ENCODE measurements at regions of chr1 and their contacts with region 1.

Region 1: DNA sequence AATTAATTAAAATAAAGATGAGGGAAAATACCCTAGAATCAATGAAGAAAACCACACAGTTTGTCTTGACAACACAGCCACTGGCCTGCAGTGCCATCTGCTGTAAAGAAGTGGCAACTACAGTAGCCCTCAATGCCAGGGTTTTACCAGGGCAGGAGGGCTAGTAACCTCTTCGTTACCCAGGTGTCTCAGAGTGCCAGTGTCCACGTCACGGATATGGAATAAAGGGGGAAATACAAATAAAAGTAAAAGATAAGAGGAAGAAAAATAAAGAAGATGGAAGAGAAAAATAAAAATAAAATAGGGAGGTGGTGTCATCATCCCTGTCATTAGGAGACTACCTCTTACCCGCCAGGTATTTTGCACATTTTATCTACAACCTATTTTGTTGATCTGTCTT is 14.2 kb upstream of the SLC44A3 start:
- DNase-seq: peak in 8 of 9 experiments; percentile 22 to 61 (median 44)
- ATAC-seq: peak; percentile 70
- H3K4me3 ChIP-seq: no peak overlapping the region
- H3K4me3 Mint-ChIP-seq: no peak overlapping the region
- H3K27ac ChIP-seq: no peak overlapping the region
- H3K27ac Mint-ChIP-seq: no peak overlapping the region
- H3K4me1 ChIP-seq: peaks cover 5% of the 10 kb centered on the region
- H3K4me1 Mint-ChIP-seq: peaks cover 10% of the 10 kb centered on the region
- H3K27me3 ChIP-seq: no peaks in the 10 kb centered on the region
- H3K27me3 Mint-ChIP-seq: peaks cover 5% of the 10 kb centered on the region
- CTCF ChIP-seq: peak; percentile 99

Region 2: GRCh38 chr1:93437976-93438605 is 1367.8 kb before region 1 on chr1:
- CTCF ChIA-PET with region 1: no interaction called
- POLR2A ChIA-PET with region 1: no interaction called
- intact Hi-C with region 1: loop called (anchors 5 to 10 kb)
- DNase-seq: peak in 2 of 9 experiments; percentile 45 to 59
- ATAC-seq: peak; percentile 52
- H3K4me3 ChIP-seq: no peak overlapping the region
- H3K4me3 Mint-ChIP-seq: no peak overlapping the region
- H3K27ac ChIP-seq: no peak overlapping the region
- H3K27ac Mint-ChIP-seq: no peak overlapping the region
- H3K4me1 ChIP-seq: no peaks in the 10 kb centered on the region
- H3K4me1 Mint-ChIP-seq: no peaks in the 10 kb centered on the region
- H3K27me3 ChIP-seq: no peaks in the 10 kb centered on the region
- H3K27me3 Mint-ChIP-seq: peaks cover 11% of the 10 kb centered on the region
- CTCF ChIP-seq: peak; percentile 52

Region 3: DNA sequence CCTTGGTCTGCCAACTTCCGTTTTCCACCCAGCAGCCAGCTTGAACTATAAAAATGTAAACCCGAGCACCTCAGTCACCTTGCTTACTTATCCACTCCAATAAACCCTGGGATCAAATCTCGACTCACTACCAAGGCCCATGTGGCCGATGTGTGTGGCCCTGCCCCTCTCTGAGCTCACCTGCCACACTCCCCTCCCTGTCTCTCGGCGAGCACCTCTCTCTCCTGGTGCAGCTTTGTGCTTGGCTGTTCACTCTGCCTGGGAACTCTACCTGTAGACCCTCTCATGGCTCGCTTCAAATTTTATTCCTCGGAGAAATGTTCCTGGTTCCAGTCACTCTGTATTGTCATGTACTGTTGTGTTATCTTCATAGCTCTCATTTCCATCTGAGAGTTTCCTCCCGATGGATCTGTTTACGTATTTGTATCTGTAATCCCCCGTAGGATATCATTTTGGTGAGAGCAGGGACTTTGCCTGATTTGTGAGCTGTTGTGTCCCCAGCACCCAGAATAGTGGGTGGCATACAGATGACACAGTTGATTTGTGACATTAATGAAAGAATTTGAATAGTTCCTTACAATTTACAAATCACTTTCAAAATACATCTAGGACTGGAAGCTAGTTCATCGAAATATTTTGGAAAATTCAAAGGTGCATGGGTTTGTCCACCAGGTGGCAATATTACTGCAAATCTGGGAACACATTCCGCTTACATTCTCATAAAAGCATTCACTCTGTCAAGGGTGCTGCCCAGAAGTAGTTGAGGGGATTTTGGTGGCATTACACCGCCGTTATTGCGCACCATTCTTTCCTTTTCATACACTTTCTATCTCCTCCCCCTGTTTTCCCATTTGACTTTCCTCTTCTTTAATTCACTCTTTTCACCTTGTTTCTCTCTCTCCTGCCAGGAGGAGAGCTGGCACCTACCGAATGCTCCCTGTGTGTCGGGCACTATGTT is 780.2 kb before region 1 on chr1:
- CTCF ChIA-PET with region 1: interaction called, 7 read pairs
- POLR2A ChIA-PET with region 1: no interaction called
- intact Hi-C with region 1: loop called in 1 of 2 experiments (anchors 5 kb)
- DNase-seq: peak in 2 of 9 experiments; percentile 25 to 47
- ATAC-seq: no peak
- H3K4me3 ChIP-seq: no peak overlapping the region
- H3K4me3 Mint-ChIP-seq: no peak overlapping the region
- H3K27ac ChIP-seq: no peak overlapping the region
- H3K27ac Mint-ChIP-seq: no peak overlapping the region
- H3K4me1 ChIP-seq: no peaks in the 10 kb centered on the region
- H3K4me1 Mint-ChIP-seq: no peaks in the 10 kb centered on the region
- H3K27me3 ChIP-seq: no peaks in the 10 kb centered on the region
- H3K27me3 Mint-ChIP-seq: peaks cover 7% of the 10 kb centered on the region
- CTCF ChIP-seq: no peak

Region 4: GRCh38 chr1:94061513-94062443 is 744.1 kb before region 1 on chr1:
- CTCF ChIA-PET with region 1: interaction called, 10 read pairs
- POLR2A ChIA-PET with region 1: no interaction called
- intact Hi-C with region 1: loop called in 1 of 2 experiments (anchors 5 kb)
- DNase-seq: peak in 4 of 9 experiments; percentile 21 to 55 (median 29)
- ATAC-seq: no peak
- H3K4me3 ChIP-seq: no peak overlapping the region
- H3K4me3 Mint-ChIP-seq: no peak overlapping the region
- H3K27ac ChIP-seq: no peak overlapping the region
- H3K27ac Mint-ChIP-seq: no peak overlapping the region
- H3K4me1 ChIP-seq: no peaks in the 10 kb centered on the region
- H3K4me1 Mint-ChIP-seq: no peaks in the 10 kb centered on the region
- H3K27me3 ChIP-seq: peaks cover 0 to 2% of the 10 kb centered on the region in 2 experiments
- H3K27me3 Mint-ChIP-seq: peaks cover 12% of the 10 kb centered on the region
- CTCF ChIP-seq: peak; percentile 50

Region 5: GRCh38 chr1:94514095-94514727 is 291.7 kb before region 1 on chr1:
- CTCF ChIA-PET with region 1: interaction called, 3 read pairs
- POLR2A ChIA-PET with region 1: no interaction called
- intact Hi-C with region 1: loop called in 1 of 2 experiments (anchors 10 kb)
- DNase-seq: peak in 2 of 9 experiments; percentile 10 to 11
- ATAC-seq: no peak
- H3K4me3 ChIP-seq: no peak overlapping the region
- H3K4me3 Mint-ChIP-seq: no peak overlapping the region
- H3K27ac ChIP-seq: no peak overlapping the region
- H3K27ac Mint-ChIP-seq: no peak overlapping the region
- H3K4me1 ChIP-seq: no peaks in the 10 kb centered on the region
- H3K4me1 Mint-ChIP-seq: no peaks in the 10 kb centered on the region
- H3K27me3 ChIP-seq: no peaks in the 10 kb centered on the region
- H3K27me3 Mint-ChIP-seq: no peaks in the 10 kb centered on the region
- CTCF ChIP-seq: no peak

Region 6: DNA sequence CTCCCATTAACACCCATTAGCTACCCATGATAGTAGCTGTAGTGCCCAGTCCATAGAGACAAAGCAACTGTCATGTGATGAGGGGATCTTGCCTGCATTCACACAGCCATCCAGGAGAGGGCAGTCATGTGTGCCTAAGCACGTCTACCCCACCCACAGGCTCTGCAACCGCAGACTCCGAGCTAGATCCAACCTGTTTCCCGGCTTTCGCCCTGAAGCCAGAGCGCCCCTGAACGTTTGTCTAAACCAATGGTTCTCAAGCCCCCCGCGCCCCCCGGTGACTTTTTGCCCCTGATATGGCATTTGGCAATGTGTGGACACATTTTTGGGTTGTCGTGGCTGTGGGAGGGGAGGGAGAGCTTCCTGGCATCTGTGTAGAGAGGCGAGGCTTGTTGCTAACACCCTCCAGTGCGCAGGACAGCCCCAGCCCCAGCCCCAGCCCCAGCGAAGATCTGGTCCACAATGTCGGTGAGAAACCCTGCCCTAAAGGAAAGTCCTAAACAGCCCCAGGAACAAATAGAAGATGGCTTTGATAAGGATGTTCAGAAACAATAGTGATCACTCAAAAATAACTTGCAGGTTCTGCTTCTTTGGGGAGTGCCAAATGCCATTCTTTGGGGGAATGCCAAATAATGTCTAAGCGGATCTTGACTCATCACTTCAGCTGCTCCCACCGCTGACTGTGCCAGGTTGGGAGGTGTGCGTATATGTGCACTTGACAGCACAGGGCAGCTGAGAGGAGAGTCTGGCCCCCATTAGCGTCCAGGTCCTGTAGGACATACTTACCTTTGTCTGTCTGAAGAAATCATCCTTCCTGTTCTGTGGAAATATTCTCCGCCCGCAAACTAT is 48.8 kb after region 1 on chr1:
- CTCF ChIA-PET with region 1: interaction called, 11 read pairs
- POLR2A ChIA-PET with region 1: no interaction called
- intact Hi-C with region 1: no loop called
- DNase-seq: peak; percentile 53 to 88 (median 74)
- ATAC-seq: peak; percentile 98
- H3K4me3 ChIP-seq: peak overlapping the region; percentile 50 to 51
- H3K4me3 Mint-ChIP-seq: no peak overlapping the region
- H3K27ac ChIP-seq: peak overlapping the region in 1 of 2 experiments; percentile 13
- H3K27ac Mint-ChIP-seq: no peak overlapping the region
- H3K4me1 ChIP-seq: no peaks in the 10 kb centered on the region
- H3K4me1 Mint-ChIP-seq: no peaks in the 10 kb centered on the region
- H3K27me3 ChIP-seq: no peaks in the 10 kb centered on the region
- H3K27me3 Mint-ChIP-seq: peaks cover 6% of the 10 kb centered on the region
- CTCF ChIP-seq: peak; percentile 72

Region 7: GRCh38 chr1:95716097-95716496 is 910.2 kb after region 1 on chr1:
- CTCF ChIA-PET with region 1: no interaction called
- POLR2A ChIA-PET with region 1: no interaction called
- intact Hi-C with region 1: no loop called
- DNase-seq: no peak
- ATAC-seq: no peak
- H3K4me3 ChIP-seq: no peak overlapping the region
- H3K4me3 Mint-ChIP-seq: no peak overlapping the region
- H3K27ac ChIP-seq: no peak overlapping the region
- H3K27ac Mint-ChIP-seq: no peak overlapping the region
- H3K4me1 ChIP-seq: no peaks in the 10 kb centered on the region
- H3K4me1 Mint-ChIP-seq: no peaks in the 10 kb centered on the region
- H3K27me3 ChIP-seq: no peaks in the 10 kb centered on the region
- H3K27me3 Mint-ChIP-seq: no peaks in the 10 kb centered on the region
- CTCF ChIP-seq: no peak